ENCODE measurements at regions of chr14 and their contacts with region 1.

Region 1: DNA sequence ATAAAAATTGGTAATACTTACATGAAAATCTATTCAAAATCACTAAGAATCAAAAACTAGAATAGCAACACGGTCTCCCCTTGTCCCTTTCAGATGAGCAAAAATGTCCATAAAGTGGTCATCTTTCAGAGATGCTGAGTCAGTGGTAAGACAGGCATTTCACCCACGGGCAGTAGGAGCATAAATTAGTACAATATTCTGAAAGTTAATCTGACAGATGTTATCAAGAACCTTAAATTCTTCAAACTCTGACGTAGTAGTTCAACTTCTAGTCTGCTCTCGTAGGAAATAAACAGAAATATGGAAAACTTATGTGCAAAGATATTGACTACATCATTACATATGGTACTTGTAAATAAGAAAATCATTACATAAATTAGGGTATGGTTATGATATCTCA is 33.1 kb upstream of the GNPNAT1 start:
- DNase-seq: no peak
- H3K4me3 ChIP-seq: no peak overlapping the region
- H3K27ac ChIP-seq: no peak overlapping the region
- H3K4me1 ChIP-seq: no peaks in the 10 kb centered on the region
- CTCF ChIP-seq: no peak

Region 2: GRCh38 chr14:52808101-52808500 is 16.4 kb before region 1 on chr14:
- CTCF ChIA-PET with region 1: no interaction called
- POLR2A ChIA-PET with region 1: no interaction called
- intact Hi-C with region 1: no loop called
- DNase-seq: no peak
- H3K4me3 ChIP-seq: no peak overlapping the region
- H3K27ac ChIP-seq: no peak overlapping the region
- H3K4me1 ChIP-seq: no peaks in the 10 kb centered on the region
- CTCF ChIP-seq: no peak

Region 3: DNA sequence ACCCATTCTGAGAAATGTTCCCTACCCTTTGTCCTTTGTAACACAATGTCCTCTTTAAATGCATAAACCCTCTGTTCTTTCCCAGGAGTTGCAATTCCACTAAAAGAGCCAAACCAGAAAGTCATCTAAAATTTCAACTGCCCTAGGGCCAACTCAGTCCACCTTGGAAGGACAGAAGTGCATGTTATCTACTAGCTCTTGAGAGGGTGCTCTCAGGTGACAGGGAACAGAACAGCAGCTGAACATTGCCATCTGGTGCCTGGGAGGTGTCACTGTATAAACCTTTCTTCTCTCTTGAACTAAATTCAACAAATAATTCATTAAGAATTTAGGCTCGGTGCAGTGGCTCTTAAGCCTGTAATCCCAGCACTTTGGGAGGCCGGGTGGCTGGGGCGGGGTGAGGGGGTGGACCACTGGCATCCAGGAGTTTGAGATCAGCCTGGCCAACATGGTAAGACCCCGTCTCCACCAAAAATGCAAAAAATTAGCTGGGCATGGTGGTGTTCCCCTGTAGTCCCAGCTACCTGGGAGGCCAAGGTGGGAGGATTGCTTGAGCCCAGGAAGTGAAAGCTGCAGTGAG is 136.6 kb after region 1 on chr14:
- CTCF ChIA-PET with region 1: no interaction called
- POLR2A ChIA-PET with region 1: no interaction called
- intact Hi-C with region 1: loop called (anchors 2 kb)
- DNase-seq: peak; percentile 30
- H3K4me3 ChIP-seq: no peak overlapping the region
- H3K27ac ChIP-seq: no peak overlapping the region
- H3K4me1 ChIP-seq: no peaks in the 10 kb centered on the region
- CTCF ChIP-seq: peak; percentile 72

Region 4: DNA sequence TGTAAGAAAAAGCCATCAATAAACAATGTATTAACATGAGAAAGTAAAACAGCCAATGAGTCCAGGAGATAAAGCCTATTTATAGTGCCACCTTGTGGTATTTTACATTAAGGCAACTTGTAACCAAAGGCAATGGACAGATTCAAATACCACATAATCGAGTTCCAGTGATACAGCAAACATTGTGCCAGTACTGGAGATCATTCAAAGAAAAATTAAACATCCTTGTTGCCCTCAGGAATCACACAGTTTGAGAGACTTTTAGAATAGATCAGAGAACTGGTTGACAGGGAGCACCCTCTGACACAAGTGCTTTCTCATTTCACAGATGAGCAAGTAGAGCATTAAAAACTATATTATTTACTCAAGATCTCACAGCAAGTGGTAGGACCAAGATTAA is 230.5 kb after region 1 on chr14:
- CTCF ChIA-PET with region 1: no interaction called
- POLR2A ChIA-PET with region 1: no interaction called
- intact Hi-C with region 1: loop called (anchors 5 kb)
- DNase-seq: peak; percentile 51
- H3K4me3 ChIP-seq: no peak overlapping the region
- H3K27ac ChIP-seq: no peak overlapping the region
- H3K4me1 ChIP-seq: no peaks in the 10 kb centered on the region
- CTCF ChIP-seq: peak; percentile 91

Region 5: DNA sequence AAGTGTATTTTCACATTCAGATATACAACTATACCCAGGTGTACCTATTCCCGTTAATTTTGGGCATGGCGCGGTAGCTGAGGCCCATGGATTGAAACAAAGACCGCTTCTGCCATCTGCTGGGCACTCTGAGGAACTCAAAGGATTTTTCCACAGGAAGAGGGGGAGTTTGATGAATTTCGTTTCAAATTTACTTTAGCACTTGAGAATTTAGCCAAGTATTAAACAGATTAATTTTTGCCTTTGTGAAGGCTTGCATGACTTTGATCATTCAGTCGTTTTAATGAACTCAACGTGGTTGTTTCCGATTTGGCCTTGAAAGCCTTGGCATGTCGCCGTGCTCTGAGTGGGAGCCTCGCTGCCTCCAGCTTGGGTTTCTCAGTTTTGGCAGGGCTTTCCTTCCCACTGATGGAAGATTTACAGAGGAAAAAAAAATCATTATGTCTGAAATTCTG is 481.8 kb after region 1 on chr14:
- CTCF ChIA-PET with region 1: no interaction called
- POLR2A ChIA-PET with region 1: no interaction called
- intact Hi-C with region 1: loop called (anchors 1 kb)
- DNase-seq: peak; percentile 40
- H3K4me3 ChIP-seq: no peak overlapping the region
- H3K27ac ChIP-seq: no peak overlapping the region
- H3K4me1 ChIP-seq: no peaks in the 10 kb centered on the region
- CTCF ChIP-seq: peak; percentile 88

Measured in OCI-LY7 (cell line).